ENCODE measurements at regions of chr20 and their contacts with region 1.

Region 1: GRCh38 chr20:51521833-51522606 is 20.5 kb downstream of the NFATC2 start:
- DNase-seq: no peak
- H3K4me3 ChIP-seq: no peak overlapping the region
- H3K27ac ChIP-seq: no peak overlapping the region
- H3K4me1 ChIP-seq: no peaks in the 10 kb centered on the region
- H3K27me3 ChIP-seq: no peaks in the 10 kb centered on the region
- CTCF ChIP-seq: no peak

Region 2: GRCh38 chr20:51195419-51195901 is 326.6 kb before region 1 on chr20:
- CTCF ChIA-PET with region 1: no interaction called
- POLR2A ChIA-PET with region 1: no interaction called
- intact Hi-C with region 1: no loop called
- DNase-seq: peak; percentile 61
- H3K4me3 ChIP-seq: no peak overlapping the region
- H3K27ac ChIP-seq: no peak overlapping the region
- H3K4me1 ChIP-seq: no peaks in the 10 kb centered on the region
- H3K27me3 ChIP-seq: no peaks in the 10 kb centered on the region
- CTCF ChIP-seq: no peak

Region 3: GRCh38 chr20:51500311-51500710 is 21.7 kb before region 1 on chr20:
- CTCF ChIA-PET with region 1: no interaction called
- POLR2A ChIA-PET with region 1: no interaction called
- intact Hi-C with region 1: loop called (anchors 1 kb)
- DNase-seq: peak; percentile 26
- H3K4me3 ChIP-seq: no peak overlapping the region
- H3K27ac ChIP-seq: peak overlapping the region; percentile 24
- H3K4me1 ChIP-seq: peaks cover 31% of the 10 kb centered on the region
- H3K27me3 ChIP-seq: no peaks in the 10 kb centered on the region
- CTCF ChIP-seq: no peak